ENCODE measurements at regions of chr17 and their contacts with region 1.

Region 1: GRCh38 chr17:48492401-48493298 is 38.2 kb downstream of the HOXB1 start:
- DNase-seq: peak; percentile 74
- H3K4me3 Mint-ChIP-seq: peak overlapping the region; percentile 45
- H3K27ac Mint-ChIP-seq: no peak overlapping the region
- H3K4me1 Mint-ChIP-seq: peaks cover 19% of the 10 kb centered on the region
- H3K27me3 Mint-ChIP-seq: peaks cover 13% of the 10 kb centered on the region

Region 2: GRCh38 chr17:48335858-48336500 is 156.7 kb before region 1 on chr17:
- CTCF ChIA-PET with region 1: interaction called, 6 read pairs
- intact Hi-C with region 1: loop called (anchors 5 kb)
- DNase-seq: no peak
- H3K4me3 Mint-ChIP-seq: no peak overlapping the region
- H3K27ac Mint-ChIP-seq: no peak overlapping the region
- H3K4me1 Mint-ChIP-seq: peaks cover 6% of the 10 kb centered on the region
- H3K27me3 Mint-ChIP-seq: no peaks in the 10 kb centered on the region

Region 3: GRCh38 chr17:48503748-48504147 is 11.1 kb after region 1 on chr17:
- CTCF ChIA-PET with region 1: interaction called, 13 read pairs
- intact Hi-C with region 1: no loop called
- DNase-seq: no peak
- H3K4me3 Mint-ChIP-seq: no peak overlapping the region
- H3K27ac Mint-ChIP-seq: no peak overlapping the region
- H3K4me1 Mint-ChIP-seq: peaks cover 9% of the 10 kb centered on the region
- H3K27me3 Mint-ChIP-seq: peaks cover 14% of the 10 kb centered on the region

Region 4: GRCh38 chr17:48543107-48543853 is 50.6 kb after region 1 on chr17:
- CTCF ChIA-PET with region 1: interaction called, 5 read pairs
- intact Hi-C with region 1: loop called (anchors 5 kb)
- DNase-seq: peak; percentile 73
- H3K4me3 Mint-ChIP-seq: peak overlapping the region; percentile 96
- H3K27ac Mint-ChIP-seq: peak overlapping the region; percentile 100
- H3K4me1 Mint-ChIP-seq: peaks cover 55% of the 10 kb centered on the region
- H3K27me3 Mint-ChIP-seq: peaks cover 9% of the 10 kb centered on the region

Region 5: DNA sequence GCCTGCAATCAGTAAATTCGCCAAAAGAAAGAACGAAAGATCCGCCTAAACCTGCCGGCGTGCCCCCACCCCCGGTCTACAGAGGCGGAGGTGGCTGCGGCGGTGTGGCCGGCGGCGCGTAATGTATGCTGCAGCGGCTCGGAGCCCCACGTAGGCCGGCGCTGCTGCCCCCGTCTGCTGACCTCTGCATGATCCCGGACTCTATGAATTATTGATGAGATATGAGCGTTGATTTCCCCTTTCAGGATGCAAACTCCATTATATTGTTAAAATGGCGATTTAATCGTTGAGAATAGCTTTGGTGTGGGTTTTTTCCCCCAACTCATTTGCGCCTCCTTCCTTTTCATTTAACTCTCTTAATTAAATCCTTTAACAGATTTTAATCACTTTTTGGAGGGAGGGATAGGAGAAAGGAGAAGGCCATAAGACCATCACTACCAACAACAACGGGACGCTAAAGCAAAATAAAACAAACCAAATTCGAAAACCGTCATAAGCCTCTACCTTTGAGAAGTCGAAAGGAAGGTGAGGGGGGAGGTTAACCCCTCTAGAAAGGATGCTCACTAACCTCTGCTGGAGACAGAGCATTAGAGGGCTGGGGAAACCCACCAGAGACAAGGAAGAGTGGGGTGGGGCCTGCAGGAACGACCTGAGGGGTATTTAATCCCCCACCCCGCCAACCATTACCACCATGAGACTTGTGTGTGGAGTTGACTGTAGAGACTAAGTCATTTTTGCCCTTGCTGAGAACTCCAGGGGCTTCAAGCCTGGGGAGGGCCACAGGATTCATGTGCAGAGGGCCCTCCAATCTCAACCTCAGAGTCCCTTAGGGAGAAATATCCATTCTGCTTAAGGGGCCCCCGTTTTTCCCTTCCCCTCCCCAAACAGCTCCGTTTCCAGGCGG is 94.0 kb after region 1 on chr17:
- CTCF ChIA-PET with region 1: interaction called, 24 read pairs
- intact Hi-C with region 1: no loop called
- DNase-seq: peak; percentile 36
- H3K4me3 Mint-ChIP-seq: peak overlapping the region; percentile 83
- H3K27ac Mint-ChIP-seq: no peak overlapping the region
- H3K4me1 Mint-ChIP-seq: peaks cover 27% of the 10 kb centered on the region
- H3K27me3 Mint-ChIP-seq: peaks cover 92% of the 10 kb centered on the region

Region 6: DNA sequence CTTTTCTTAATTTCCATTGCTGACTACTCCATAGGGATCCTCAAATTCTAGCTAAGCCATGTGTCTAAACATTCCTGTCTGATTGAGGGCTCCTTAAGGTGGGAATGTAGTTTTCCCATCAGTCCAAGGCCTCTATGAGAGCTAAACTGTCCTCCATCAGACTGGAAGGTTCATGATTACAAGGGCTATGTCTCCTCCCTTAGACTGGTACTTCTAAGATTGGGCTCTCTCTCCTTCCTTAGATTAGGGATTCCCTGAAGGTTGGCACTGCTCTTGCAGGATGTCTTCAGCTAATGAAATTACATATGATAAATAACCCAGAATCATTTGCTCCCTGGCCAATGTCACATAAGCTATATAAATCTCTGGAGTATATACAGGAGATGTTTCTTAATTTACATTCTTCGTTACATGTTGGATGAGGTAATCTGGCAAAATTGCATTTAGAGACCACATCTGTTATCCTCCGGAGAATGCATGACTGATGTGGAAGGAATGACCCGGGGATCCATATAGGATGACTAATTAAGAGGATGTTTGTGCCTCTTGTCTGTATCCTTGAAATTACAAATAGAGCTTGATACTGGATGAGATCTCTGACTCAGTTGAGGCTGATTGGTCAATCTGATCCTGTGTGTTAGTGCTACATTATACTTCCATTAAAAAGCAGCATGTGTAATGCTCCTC is 654.1 kb after region 1 on chr17:
- CTCF ChIA-PET with region 1: no interaction called
- intact Hi-C with region 1: no loop called
- DNase-seq: no peak
- H3K4me3 Mint-ChIP-seq: no peak overlapping the region
- H3K27ac Mint-ChIP-seq: no peak overlapping the region
- H3K4me1 Mint-ChIP-seq: no peaks in the 10 kb centered on the region
- H3K27me3 Mint-ChIP-seq: peaks cover 15% of the 10 kb centered on the region